Caco-2 (cell line): ENCODE measurements at regions of chr19 and their contacts with region 1.

Region 1: DNA sequence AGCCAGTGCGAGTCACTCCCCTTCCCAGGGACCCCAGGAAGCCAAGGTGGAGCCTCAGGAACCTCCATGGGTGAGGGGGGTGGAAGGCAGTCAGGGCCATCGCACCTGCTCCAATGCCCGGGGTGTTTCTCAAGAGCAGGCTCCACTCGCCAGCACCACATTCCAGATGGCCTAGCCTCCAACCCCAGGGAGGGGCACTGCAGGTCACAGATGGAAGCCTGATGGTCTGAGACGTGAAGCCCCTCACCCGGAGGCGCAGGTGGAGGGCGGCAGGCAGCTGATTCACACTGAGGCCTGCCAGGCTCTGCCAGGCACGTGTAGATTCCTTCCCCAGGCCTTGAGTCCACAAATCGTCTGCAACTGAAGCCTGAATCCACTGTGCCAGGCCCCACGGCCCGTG is 23.0 kb upstream of the ISYNA1 start:
- DNase-seq: no peak
- H3K4me3 ChIP-seq: no peak overlapping the region
- H3K4me3 Mint-ChIP-seq: no peak overlapping the region
- H3K27ac Mint-ChIP-seq: peak overlapping the region; percentile 75
- H3K4me1 ChIP-seq: peaks cover 28% of the 10 kb centered on the region
- H3K4me1 Mint-ChIP-seq: no peaks in the 10 kb centered on the region
- H3K27me3 ChIP-seq: no peaks in the 10 kb centered on the region
- H3K27me3 Mint-ChIP-seq: no peaks in the 10 kb centered on the region
- CTCF ChIP-seq: no peak

Region 2: DNA sequence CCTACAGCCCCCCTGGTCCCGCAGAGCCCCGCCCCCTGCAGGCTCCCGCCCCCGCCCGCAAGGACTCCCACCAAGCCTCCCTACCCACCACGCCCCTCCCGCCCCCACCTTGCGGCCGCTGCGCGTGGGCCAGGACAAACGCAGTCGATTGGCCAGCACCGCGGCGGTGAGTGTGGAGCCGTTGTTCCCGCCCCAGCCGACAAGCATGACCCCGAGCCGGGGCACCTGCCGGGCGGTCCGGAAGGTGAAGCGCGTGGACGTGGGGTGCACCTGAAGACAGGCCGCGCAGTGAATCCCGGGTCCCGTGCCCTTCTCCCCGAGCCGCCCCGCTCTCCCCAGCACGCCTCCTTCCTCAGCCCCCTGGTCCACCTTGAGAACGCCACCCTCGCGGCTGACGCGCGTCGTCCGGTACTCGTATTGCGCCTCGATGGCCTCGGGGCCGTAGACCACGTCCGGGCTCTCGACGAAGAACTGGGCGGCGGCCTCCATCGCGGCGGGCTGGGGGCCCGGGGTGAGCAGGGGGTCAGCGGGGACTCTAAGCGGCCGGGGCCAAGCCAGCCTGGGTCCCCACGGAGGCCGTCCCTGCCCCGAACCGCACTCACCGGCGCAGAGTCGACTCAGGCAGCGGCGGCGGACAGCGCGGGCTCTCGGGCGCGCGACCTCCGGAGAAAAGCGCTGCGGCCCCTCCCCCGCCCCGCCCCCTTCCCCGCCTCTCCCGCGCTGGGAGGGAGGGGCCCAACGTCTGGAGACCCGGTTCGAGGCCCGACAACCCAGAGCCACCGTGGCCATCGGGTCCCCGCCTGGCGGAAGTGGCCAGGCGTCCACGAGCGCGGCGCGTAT is 23.2 kb before region 1 on chr19 and contains the start of gene ISYNA1:
- CTCF ChIA-PET with region 1: interaction called, 19 read pairs
- POLR2A ChIA-PET with region 1: no interaction called
- intact Hi-C with region 1: no loop called
- DNase-seq: peak; percentile 56 to 57
- H3K4me3 ChIP-seq: peak within 1 kb of the TSS; percentile 75
- H3K4me3 Mint-ChIP-seq: peak within 1 kb of the TSS; percentile 78
- H3K27ac Mint-ChIP-seq: peak within 1 kb of the TSS; percentile 67
- H3K4me1 ChIP-seq: peaks cover 10% of the 10 kb centered on the region
- H3K4me1 Mint-ChIP-seq: peaks cover 16% of the 10 kb centered on the region
- H3K27me3 ChIP-seq: no peaks in the 10 kb centered on the region
- H3K27me3 Mint-ChIP-seq: no peaks in the 10 kb centered on the region
- CTCF ChIP-seq: no peak
- total RNA-seq, gene ISYNA1: 65.3 and 67.3 TPM in 2 replicates

Region 3: GRCh38 chr19:18626911-18627310 is 166.0 kb after region 1 on chr19:
- CTCF ChIA-PET with region 1: no interaction called
- POLR2A ChIA-PET with region 1: no interaction called
- intact Hi-C with region 1: no loop called
- DNase-seq: no peak
- H3K4me3 ChIP-seq: no peak overlapping the region
- H3K4me3 Mint-ChIP-seq: no peak overlapping the region
- H3K27ac Mint-ChIP-seq: no peak overlapping the region
- H3K4me1 ChIP-seq: no peaks in the 10 kb centered on the region
- H3K4me1 Mint-ChIP-seq: no peaks in the 10 kb centered on the region
- H3K27me3 ChIP-seq: no peaks in the 10 kb centered on the region
- H3K27me3 Mint-ChIP-seq: peaks cover 2% of the 10 kb centered on the region
- CTCF ChIP-seq: no peak